Right lobe of liver (tissue), 6 donors: ENCODE measurements at regions of chr4 and their contacts with region 1.

Region 1: DNA sequence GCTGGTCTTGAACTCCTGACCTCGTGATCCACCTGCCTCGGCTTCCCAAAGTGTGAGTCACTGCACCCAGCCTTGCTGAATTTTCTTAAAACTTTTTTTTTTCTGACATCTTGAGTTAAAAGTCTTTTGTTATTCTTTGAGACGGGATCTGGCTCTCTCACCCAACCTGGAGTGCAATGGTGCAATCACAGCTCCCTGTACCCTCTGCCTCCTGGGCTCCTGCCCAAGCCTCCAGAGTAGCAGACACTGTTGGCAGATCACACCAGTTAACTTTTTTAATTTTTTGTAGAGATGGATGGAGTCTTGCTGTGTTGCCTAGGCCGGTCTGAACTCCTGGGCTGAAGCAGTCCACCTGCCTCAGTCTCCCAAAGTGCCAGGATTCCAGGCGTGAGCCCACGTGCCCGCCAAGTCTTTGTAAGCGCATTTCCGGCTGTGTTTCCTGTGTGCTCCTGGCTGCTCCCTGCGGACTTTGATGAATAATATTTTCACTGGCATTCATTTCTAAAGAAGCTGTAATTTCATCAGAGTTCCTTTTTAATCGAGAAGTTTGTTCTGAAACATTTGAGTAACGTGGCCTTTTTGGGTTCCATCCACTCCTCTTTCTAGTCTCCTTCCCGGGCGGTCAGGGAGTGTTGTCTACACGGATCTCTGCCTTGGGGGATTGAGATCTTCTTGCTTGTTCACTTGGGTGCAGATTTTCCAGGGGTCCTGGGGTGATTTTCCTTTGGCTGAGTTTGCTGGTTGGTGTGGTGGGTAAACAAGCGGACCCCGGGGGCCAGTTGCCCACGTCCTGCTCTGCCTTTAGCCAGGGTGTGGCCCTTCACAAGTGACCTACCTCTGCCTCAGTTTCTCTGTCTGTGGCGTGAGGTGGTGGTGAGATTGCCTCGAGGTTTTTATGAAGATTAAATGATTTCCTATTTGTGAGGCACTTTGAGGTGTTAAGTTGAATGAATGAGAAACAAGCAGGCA is 44.4 kb downstream of the PCGF3 start:
- DNase-seq: peak in 1 of 3 donors; percentile 63
- ATAC-seq: peak; percentile 40 to 92 (median 54)
- H3K4me3 ChIP-seq: no peak overlapping the region
- H3K27ac ChIP-seq: no peak overlapping the region
- H3K4me1 ChIP-seq: no peaks in the 10 kb centered on the region
- H3K27me3 ChIP-seq: no peaks in the 10 kb centered on the region
- CTCF ChIP-seq: no peak
- POLR2A ChIP-seq: no peak

Region 2: DNA sequence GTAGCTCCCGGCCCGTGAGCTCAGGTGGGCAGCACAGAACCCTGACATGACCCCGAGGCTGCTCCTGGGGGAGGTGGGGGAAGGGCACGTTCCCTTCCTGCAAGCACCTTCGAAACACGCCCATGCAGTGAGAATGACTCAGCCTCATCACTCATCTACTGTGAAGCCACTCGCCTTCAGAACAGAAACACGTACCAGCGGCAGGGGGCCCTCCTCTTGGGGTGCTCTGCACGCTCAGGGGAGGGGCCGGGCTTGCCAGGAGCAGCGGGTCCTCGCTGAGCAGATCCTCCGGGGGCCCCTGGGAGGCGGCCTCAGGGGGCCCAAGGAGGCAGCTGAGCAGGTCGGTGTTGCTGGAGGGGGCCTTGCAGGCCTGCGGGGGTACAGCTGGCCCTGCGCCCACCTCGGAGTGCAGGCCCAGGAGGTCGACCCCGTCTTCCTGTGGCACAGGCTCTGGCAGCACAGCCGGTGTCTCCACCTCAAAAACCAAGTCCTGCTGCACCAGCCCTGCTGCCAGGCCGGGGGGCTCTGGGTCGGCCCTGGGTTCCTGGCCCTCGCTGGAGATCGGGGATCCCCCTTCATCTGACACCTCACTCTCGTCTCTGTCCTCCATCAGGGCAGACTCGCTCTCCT is 116.9 kb after region 1 on chr4:
- intact Hi-C with region 1: loop called in 1 of 2 experiments (anchors 10 kb)
- DNase-seq: peak in 1 of 3 donors; percentile 12
- ATAC-seq: no peak
- H3K4me3 ChIP-seq: no peak overlapping the region
- H3K27ac ChIP-seq: no peak overlapping the region
- H3K4me1 ChIP-seq: no peaks in the 10 kb centered on the region
- H3K27me3 ChIP-seq: no peaks in the 10 kb centered on the region
- CTCF ChIP-seq: no peak
- POLR2A ChIP-seq: no peak

Region 3: GRCh38 chr4:1055721-1056590 is 306.0 kb after region 1 on chr4:
- intact Hi-C with region 1: no loop called
- DNase-seq: peak in 2 of 3 donors; percentile 42 to 55
- ATAC-seq: peak; percentile 45 to 63 (median 53)
- H3K4me3 ChIP-seq: no peak overlapping the region
- H3K27ac ChIP-seq: no peak overlapping the region
- H3K4me1 ChIP-seq: no peaks in the 10 kb centered on the region
- H3K27me3 ChIP-seq: peaks cover 0 to 4% of the 10 kb centered on the region in 2 donors
- CTCF ChIP-seq: no peak
- POLR2A ChIP-seq: no peak